ENCODE measurements at regions of chr10 and their contacts with region 1.

Region 1: DNA sequence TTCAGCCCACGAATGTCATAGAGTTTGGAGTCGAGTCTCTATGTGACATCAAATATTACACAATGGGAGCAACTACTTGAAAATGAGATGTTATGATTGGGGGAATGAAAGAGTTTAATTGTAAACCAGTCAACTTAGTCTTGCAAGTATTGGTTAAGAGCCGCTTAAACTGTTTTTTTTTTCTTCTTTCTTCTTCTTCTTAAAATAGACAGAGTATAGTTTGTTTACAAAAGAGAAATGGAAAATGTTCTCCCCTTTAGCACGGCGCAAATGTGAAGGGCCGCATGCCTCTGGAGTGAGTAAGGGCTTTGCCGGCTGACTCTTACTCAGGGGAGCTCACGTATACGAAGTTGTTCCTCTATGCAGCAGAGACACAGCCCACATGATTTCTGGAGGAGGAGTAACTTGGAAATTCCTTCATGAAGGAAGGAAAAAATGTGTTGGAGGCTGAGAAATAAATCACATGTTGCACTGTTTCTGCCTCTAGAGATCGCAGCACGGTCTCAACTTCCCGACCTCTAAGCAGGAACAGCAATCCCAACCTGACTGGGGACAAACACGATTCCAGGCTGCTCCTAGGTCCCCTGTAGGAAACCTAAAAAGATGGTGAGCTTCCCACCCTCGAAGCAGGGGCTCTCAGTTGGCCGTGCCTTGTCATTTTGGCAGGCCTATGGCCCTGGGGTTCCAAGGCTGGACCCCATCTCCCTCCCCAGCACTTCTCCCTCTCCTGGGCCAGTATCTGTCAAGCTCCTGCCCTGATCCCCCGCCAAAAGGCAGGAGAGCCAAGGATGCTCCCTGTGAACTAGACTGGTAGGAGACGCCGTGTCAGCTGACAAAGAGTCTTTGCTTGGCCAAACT is 44.8 kb downstream of the MYOF start:
- DNase-seq: peak; percentile 88 to 97 (median 89)
- H3K4me3 ChIP-seq: no peak overlapping the region
- H3K4me3 Mint-ChIP-seq: peak overlapping the region in 1 of 2 donors; percentile 42
- H3K27ac ChIP-seq: peak overlapping the region; percentile 86 to 96
- H3K27ac Mint-ChIP-seq: peak overlapping the region; percentile 93 to 98 (median 96)
- H3K4me1 ChIP-seq: peaks cover 70 to 79% of the 10 kb centered on the region in 2 donors
- H3K4me1 Mint-ChIP-seq: peaks cover 77% of the 10 kb centered on the region
- H3K27me3 ChIP-seq: no peaks in the 10 kb centered on the region
- H3K27me3 Mint-ChIP-seq: no peaks in the 10 kb centered on the region
- CTCF ChIP-seq: no peak

Region 2: DNA sequence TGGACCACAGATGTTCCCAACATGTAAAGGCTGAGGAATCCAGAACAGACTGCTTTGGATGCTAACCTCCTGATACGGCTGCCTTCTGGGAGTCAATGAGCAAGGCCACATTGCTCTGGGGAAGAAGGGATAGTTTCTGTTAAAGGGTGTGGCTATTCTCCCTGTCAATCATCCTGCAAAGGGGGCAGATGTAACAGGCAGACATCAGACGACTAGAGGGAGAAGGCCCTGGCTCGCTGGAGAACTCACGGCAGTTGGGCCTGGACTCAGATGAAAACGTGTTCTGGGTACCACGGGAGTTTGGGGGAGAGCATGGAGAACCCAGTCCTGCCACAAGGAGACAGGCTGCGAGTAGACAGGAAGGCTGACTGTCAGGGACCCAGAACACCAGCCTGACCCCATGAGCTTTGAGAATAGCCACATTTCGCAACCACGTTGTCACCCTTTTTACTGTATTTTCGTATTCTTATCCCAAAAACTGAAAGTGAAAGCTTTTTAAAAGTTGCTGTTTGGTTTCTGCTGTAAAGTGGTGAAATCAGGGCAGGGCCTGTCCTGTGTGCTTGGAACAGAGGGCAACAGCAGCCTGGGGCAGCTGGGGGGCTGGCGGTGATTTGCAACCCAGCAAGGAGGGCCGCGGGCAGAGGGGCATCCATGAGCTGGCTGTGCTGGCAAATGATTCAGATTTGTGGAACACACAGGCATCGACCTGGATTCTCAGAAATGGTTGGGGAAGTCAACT is 50.5 kb before region 1 on chr10:
- intact Hi-C with region 1: loop called (anchors 5 kb)
- DNase-seq: peak; percentile 84 to 95 (median 90)
- H3K4me3 ChIP-seq: peak overlapping the region in 2 of 3 experiments; percentile 1 to 56
- H3K4me3 Mint-ChIP-seq: peak overlapping the region; percentile 74 to 84
- H3K27ac ChIP-seq: peak overlapping the region; percentile 82 to 89
- H3K27ac Mint-ChIP-seq: peak overlapping the region; percentile 95 to 99 (median 98)
- H3K4me1 ChIP-seq: peaks cover 65 to 72% of the 10 kb centered on the region in 2 donors
- H3K4me1 Mint-ChIP-seq: peaks cover 73% of the 10 kb centered on the region
- H3K27me3 ChIP-seq: no peaks in the 10 kb centered on the region
- H3K27me3 Mint-ChIP-seq: peaks cover 0 to 3% (median 0%) of the 10 kb centered on the region in 3 donors
- CTCF ChIP-seq: peak; percentile 56

Region 3: GRCh38 chr10:93471110-93471651 is 33.9 kb after region 1 on chr10:
- intact Hi-C with region 1: loop called in 1 of 2 experiments (anchors 5 kb)
- DNase-seq: peak; percentile 66 to 88 (median 87)
- H3K4me3 ChIP-seq: no peak overlapping the region
- H3K4me3 Mint-ChIP-seq: no peak overlapping the region
- H3K27ac ChIP-seq: peak overlapping the region; percentile 38 to 71
- H3K27ac Mint-ChIP-seq: peak overlapping the region; percentile 79 to 93 (median 85)
- H3K4me1 ChIP-seq: peaks cover 45 to 63% of the 10 kb centered on the region in 2 donors
- H3K4me1 Mint-ChIP-seq: peaks cover 53% of the 10 kb centered on the region
- H3K27me3 ChIP-seq: no peaks in the 10 kb centered on the region
- H3K27me3 Mint-ChIP-seq: no peaks in the 10 kb centered on the region
- CTCF ChIP-seq: no peak

Region 4: DNA sequence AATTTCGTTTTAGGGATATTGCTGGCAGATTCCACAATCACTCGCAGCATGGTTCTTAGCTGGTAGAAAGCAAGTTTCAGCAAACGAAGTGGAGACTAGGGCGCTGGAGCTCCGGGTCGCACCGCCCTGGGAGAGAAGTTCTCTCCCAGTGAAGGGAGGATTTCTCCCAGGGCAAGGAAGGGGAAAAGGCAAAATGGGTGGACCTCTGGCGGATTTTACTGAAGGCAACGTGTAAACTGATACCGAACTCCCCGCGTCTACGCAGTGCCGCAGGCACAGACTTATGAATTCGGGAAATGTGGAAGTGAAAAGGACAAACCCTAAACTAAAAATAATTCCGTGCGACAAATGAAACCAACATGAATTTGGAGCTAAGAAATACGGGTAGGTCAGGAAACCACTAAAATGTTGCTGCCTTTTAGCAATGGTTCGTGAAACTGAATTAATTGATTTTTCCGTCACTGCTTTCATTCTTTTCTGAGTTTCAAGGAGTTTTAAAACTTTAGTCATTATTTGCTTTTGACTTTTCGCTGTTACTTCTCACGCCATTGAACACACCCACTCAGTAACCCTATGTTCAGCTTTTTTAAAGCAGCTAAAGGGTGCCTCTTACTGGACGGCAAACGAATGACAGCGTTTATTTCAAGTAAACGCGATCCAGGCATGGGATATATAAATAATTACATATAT is 45.0 kb after region 1 on chr10 and contains the start of gene MYOF:
- intact Hi-C with region 1: loop called in 1 of 2 experiments (anchors 5 kb)
- DNase-seq: peak; percentile 77 to 82 (median 81)
- H3K4me3 ChIP-seq: peak within 1 kb of the TSS; percentile 58 to 98 (median 84)
- H3K4me3 Mint-ChIP-seq: peak within 1 kb of the TSS; percentile 92 to 99
- H3K27ac ChIP-seq: peak within 1 kb of the TSS; percentile 77 to 99
- H3K27ac Mint-ChIP-seq: peak within 1 kb of the TSS; percentile 92 to 99 (median 96)
- H3K4me1 ChIP-seq: peaks cover 20 to 37% of the 10 kb centered on the region in 2 donors
- H3K4me1 Mint-ChIP-seq: peaks cover 41% of the 10 kb centered on the region
- H3K27me3 ChIP-seq: no peaks in the 10 kb centered on the region
- H3K27me3 Mint-ChIP-seq: peaks cover 0 to 2% (median 2%) of the 10 kb centered on the region in 3 donors
- CTCF ChIP-seq: peak; percentile 80
- polyA plus RNA-seq, gene MYOF: 9.7 to 29.1 (median 14.5) TPM

Measured in CD14-positive monocyte (primary cell).